MCF 10A (cell line): ENCODE measurements at regions of chr5 and their contacts with region 1.

Region 1: GRCh38 chr5:58460732-58461286 is 923 bp upstream of the PLK2 start:
- DNase-seq: peak; percentile 94
- H3K4me3 Mint-ChIP-seq: peak overlapping the region; percentile 92
- H3K27ac Mint-ChIP-seq: peak overlapping the region; percentile 96
- H3K4me1 Mint-ChIP-seq: peaks cover 29% of the 10 kb centered on the region
- H3K27me3 Mint-ChIP-seq: no peaks in the 10 kb centered on the region
- CTCF ChIP-seq: peak; percentile 72

Region 2: DNA sequence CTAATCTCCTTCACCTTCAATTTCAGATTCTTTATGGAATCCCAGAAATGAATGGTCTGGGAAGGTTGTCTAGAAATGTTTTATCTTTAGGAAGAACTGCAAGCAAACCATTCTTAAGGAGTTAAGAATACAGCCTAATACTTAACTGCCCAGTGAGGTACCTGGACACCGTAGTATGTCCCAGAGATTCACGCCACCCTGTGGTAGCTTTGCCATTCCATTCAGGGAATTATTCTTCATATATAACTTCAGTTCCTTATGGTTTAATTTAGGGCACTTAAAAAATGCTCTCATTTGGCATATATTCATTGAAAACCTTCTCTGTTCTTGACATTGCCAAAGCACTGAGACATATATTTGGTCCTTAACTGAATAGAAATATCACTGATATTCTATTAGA is 1027.9 kb before region 1 on chr5:
- CTCF ChIA-PET with region 1: interaction called, 3 read pairs
- POLR2A ChIA-PET with region 1: no interaction called
- intact Hi-C with region 1: loop called (anchors 2 kb)
- DNase-seq: peak; percentile 50
- H3K4me3 Mint-ChIP-seq: no peak overlapping the region
- H3K27ac Mint-ChIP-seq: no peak overlapping the region
- H3K4me1 Mint-ChIP-seq: peaks cover 27% of the 10 kb centered on the region
- H3K27me3 Mint-ChIP-seq: no peaks in the 10 kb centered on the region
- CTCF ChIP-seq: peak; percentile 42

Region 3: GRCh38 chr5:57772512-57772911 is 688.3 kb before region 1 on chr5:
- CTCF ChIA-PET with region 1: interaction called, 151 read pairs
- POLR2A ChIA-PET with region 1: interaction called, 57 read pairs
- intact Hi-C with region 1: no loop called
- DNase-seq: no peak
- H3K4me3 Mint-ChIP-seq: no peak overlapping the region
- H3K27ac Mint-ChIP-seq: no peak overlapping the region
- H3K4me1 Mint-ChIP-seq: no peaks in the 10 kb centered on the region
- H3K27me3 Mint-ChIP-seq: no peaks in the 10 kb centered on the region
- CTCF ChIP-seq: no peak

Region 4: GRCh38 chr5:57887851-57888621 is 572.8 kb before region 1 on chr5:
- CTCF ChIA-PET with region 1: interaction called, 215 read pairs
- POLR2A ChIA-PET with region 1: interaction called, 129 read pairs
- intact Hi-C with region 1: loop called (anchors 1 kb)
- DNase-seq: peak; percentile 76
- H3K4me3 Mint-ChIP-seq: no peak overlapping the region
- H3K27ac Mint-ChIP-seq: no peak overlapping the region
- H3K4me1 Mint-ChIP-seq: peaks cover 19% of the 10 kb centered on the region
- H3K27me3 Mint-ChIP-seq: no peaks in the 10 kb centered on the region
- CTCF ChIP-seq: peak; percentile 71

Region 5: GRCh38 chr5:58094031-58094430 is 366.8 kb before region 1 on chr5:
- CTCF ChIA-PET with region 1: interaction called, 4 read pairs
- POLR2A ChIA-PET with region 1: interaction called, 3 read pairs
- intact Hi-C with region 1: loop called (anchors 10 kb)
- DNase-seq: peak; percentile 97
- H3K4me3 Mint-ChIP-seq: no peak overlapping the region
- H3K27ac Mint-ChIP-seq: no peak overlapping the region
- H3K4me1 Mint-ChIP-seq: peaks cover 6% of the 10 kb centered on the region
- H3K27me3 Mint-ChIP-seq: no peaks in the 10 kb centered on the region
- CTCF ChIP-seq: no peak

Region 6: DNA sequence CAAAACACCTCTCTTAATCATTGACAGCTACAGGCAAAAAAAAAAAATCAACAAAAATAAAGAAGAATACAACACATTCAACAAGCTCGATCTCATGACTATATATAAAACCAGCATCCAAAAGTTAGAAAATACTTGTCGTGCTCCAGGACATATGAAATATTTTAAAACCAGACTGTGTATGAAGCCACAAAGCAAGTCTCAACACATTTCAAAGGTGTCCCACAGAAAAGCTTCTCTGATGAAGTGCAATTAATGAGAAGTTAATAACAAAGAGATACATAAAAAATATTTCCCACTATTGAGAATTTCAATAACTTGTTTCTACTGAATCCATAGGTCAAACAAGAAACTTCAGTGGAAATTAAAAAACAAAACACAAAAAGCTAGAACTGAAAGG is 179.6 kb before region 1 on chr5:
- CTCF ChIA-PET with region 1: interaction called, 3 read pairs
- POLR2A ChIA-PET with region 1: interaction called, 11 read pairs
- intact Hi-C with region 1: no loop called
- DNase-seq: peak; percentile 6
- H3K4me3 Mint-ChIP-seq: no peak overlapping the region
- H3K27ac Mint-ChIP-seq: peak overlapping the region; percentile 61
- H3K4me1 Mint-ChIP-seq: peaks cover 11% of the 10 kb centered on the region
- H3K27me3 Mint-ChIP-seq: no peaks in the 10 kb centered on the region
- CTCF ChIP-seq: no peak